ENCODE measurements at regions of chr17 and their contacts with region 1.

Region 1: GRCh38 chr17:50626037-50626574 is 8.6 kb upstream of the ABCC3 start:
- DNase-seq: peak; percentile 88 to 90
- H3K4me3 ChIP-seq: no peak overlapping the region
- H3K27ac ChIP-seq: peak overlapping the region; percentile 21 to 67 (median 66)
- H3K4me1 ChIP-seq: peaks cover 31 to 33% of the 10 kb centered on the region in 2 donors
- H3K27me3 ChIP-seq: no peaks in the 10 kb centered on the region
- CTCF ChIP-seq: peak; percentile 64 to 93 (median 84)
- POLR2A ChIP-seq: no peak

Region 2: DNA sequence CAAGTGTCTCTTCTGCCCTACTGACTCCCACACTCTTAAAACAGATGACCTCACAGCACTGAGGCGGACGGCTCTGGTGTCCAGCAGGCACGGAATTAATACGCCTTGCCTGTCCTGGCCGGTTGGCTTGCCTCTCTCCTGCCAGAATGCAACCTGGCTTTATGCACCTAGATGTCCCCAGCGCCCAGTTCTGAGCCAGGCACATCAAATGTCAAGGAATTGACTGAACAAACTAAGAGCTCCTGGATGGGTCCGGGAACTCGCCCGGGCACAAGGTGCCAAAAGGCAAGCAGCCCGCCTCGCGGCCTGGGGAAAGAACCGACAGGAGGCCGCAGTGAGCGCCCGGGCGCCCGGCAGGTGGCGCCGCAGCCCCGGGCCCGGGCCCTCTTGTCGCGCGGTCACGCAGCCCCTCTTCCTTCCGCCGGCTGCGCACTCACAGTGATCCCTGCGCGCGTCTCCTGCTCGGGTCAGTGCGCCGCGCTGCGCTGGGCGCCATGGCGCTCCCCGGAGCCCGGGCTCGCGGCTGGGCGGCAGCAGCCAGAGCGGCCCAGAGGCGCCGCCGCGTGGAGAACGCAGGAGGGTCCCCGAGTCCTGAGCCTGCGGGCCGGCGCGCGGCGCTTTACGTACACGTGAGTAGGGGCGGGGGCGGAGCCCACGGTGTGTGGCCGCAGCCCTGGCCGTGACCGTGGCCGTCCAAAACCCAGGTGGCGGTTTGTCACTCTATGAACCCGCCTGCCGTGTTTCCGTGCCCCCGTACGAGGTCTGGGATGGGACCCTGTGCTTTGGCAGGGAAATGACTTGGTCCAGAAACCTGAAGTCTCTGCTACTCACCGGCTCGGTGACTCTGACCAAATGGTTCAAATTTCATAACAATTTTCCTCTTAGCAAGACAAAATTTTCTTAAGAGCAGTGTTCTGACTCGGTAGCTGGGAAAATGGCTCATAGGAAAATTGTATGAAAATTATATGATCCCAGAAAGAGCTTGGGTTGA is 147.4 kb before region 1 on chr17 and contains the start of gene RSAD1:
- intact Hi-C with region 1: loop called (anchors 10 kb)
- DNase-seq: peak; percentile 93 to 94
- H3K4me3 ChIP-seq: peak within 1 kb of the TSS; percentile 27 to 85 (median 52)
- H3K27ac ChIP-seq: peak within 1 kb of the TSS; percentile 86 to 91 (median 87)
- H3K4me1 ChIP-seq: peaks cover 26 to 33% of the 10 kb centered on the region in 2 donors
- H3K27me3 ChIP-seq: no peaks in the 10 kb centered on the region
- CTCF ChIP-seq: peak; percentile 57 to 95 (median 90)
- POLR2A ChIP-seq: peak; percentile 57 to 86
- total RNA-seq, gene RSAD1: 30.2 to 50.1 (median 34.7) TPM

Region 3: GRCh38 chr17:50547035-50547735 is 78.9 kb before region 1 on chr17 and contains the start of gene SPATA20:
- intact Hi-C with region 1: loop called (anchors 2 kb)
- DNase-seq: peak; percentile 96 to 97
- H3K4me3 ChIP-seq: peak within 1 kb of the TSS in 2 of 3 donors; percentile 38 to 56
- H3K27ac ChIP-seq: peak within 1 kb of the TSS; percentile 76 to 90 (median 82)
- H3K4me1 ChIP-seq: peaks cover 16 to 26% of the 10 kb centered on the region in 2 donors
- H3K27me3 ChIP-seq: no peaks in the 10 kb centered on the region
- CTCF ChIP-seq: peak; percentile 98 to 100 (median 99)
- POLR2A ChIP-seq: peak; percentile 66 to 91
- total RNA-seq, gene SPATA20: 94.9 to 177 (median 125) TPM

Region 4: GRCh38 chr17:50681263-50682210 is 55.4 kb after region 1 on chr17:
- intact Hi-C with region 1: loop called (anchors 5 kb)
- DNase-seq: peak; percentile 48 to 49
- H3K4me3 ChIP-seq: no peak overlapping the region
- H3K27ac ChIP-seq: no peak overlapping the region
- H3K4me1 ChIP-seq: peaks cover 7 to 11% of the 10 kb centered on the region in 2 donors
- H3K27me3 ChIP-seq: no peaks in the 10 kb centered on the region
- CTCF ChIP-seq: peak in 5 of 6 experiments; percentile 12 to 65 (median 55)
- POLR2A ChIP-seq: no peak

Region 5: GRCh38 chr17:50697663-50698274 is 71.7 kb after region 1 on chr17:
- intact Hi-C with region 1: loop called (anchors 5 kb)
- DNase-seq: no peak
- H3K4me3 ChIP-seq: no peak overlapping the region
- H3K27ac ChIP-seq: no peak overlapping the region
- H3K4me1 ChIP-seq: peaks cover 12 to 23% of the 10 kb centered on the region in 2 donors
- H3K27me3 ChIP-seq: no peaks in the 10 kb centered on the region
- CTCF ChIP-seq: no peak
- POLR2A ChIP-seq: no peak

Region 6: GRCh38 chr17:51238255-51238887 is 612.3 kb after region 1 on chr17:
- intact Hi-C with region 1: no loop called
- DNase-seq: no peak
- H3K4me3 ChIP-seq: no peak overlapping the region
- H3K27ac ChIP-seq: no peak overlapping the region
- H3K4me1 ChIP-seq: peaks cover 0 to 4% of the 10 kb centered on the region in 2 donors
- H3K27me3 ChIP-seq: no peaks in the 10 kb centered on the region
- CTCF ChIP-seq: no peak
- POLR2A ChIP-seq: no peak

Measured in thyroid gland (tissue), 4 donors.